Naive thymus-derived CD4-positive, alpha-beta T cell (primary cell): ENCODE measurements at regions of chr13 and their contacts with region 1.

Region 1: GRCh38 chr13:98576963-98577822 is at the start of gene STK24:
- DNase-seq: peak in 5 of 9 donors; percentile 34 to 87 (median 66)
- ATAC-seq: peak; percentile 85
- H3K4me3 ChIP-seq: peak within 1 kb of the TSS; percentile 72
- H3K4me3 Mint-ChIP-seq: peak within 1 kb of the TSS; percentile 84 to 99 (median 93)
- H3K27ac ChIP-seq: peak within 1 kb of the TSS; percentile 85
- H3K27ac Mint-ChIP-seq: peak within 1 kb of the TSS; percentile 84 to 96 (median 93)
- H3K4me1 ChIP-seq: peaks cover 26 to 35% of the 10 kb centered on the region in 2 donors
- H3K4me1 Mint-ChIP-seq: peaks cover 35 to 48% (median 37%) of the 10 kb centered on the region in 7 donors
- H3K27me3 ChIP-seq: no peaks in the 10 kb centered on the region
- H3K27me3 Mint-ChIP-seq: no peaks in the 10 kb centered on the region
- total RNA-seq, gene STK24: 90.1 to 148 (median 121) TPM

Region 2: GRCh38 chr13:97432917-97433726 is 1144.1 kb before region 1 on chr13:
- CTCF ChIA-PET with region 1: no interaction called
- POLR2A ChIA-PET with region 1: interaction called, 3 read pairs
- intact Hi-C with region 1: loop called in 1 of 2 experiments (anchors 1 kb)
- DNase-seq: peak; percentile 97 to 99 (median 99)
- ATAC-seq: peak; percentile 85
- H3K4me3 ChIP-seq: peak overlapping the region; percentile 93
- H3K4me3 Mint-ChIP-seq: peak overlapping the region; percentile 90 to 99 (median 96)
- H3K27ac ChIP-seq: peak overlapping the region; percentile 100
- H3K27ac Mint-ChIP-seq: peak overlapping the region; percentile 98 to 100 (median 100)
- H3K4me1 ChIP-seq: peaks cover 0 to 8% of the 10 kb centered on the region in 2 donors
- H3K4me1 Mint-ChIP-seq: peaks cover 13 to 36% (median 30%) of the 10 kb centered on the region in 7 donors
- H3K27me3 ChIP-seq: no peaks in the 10 kb centered on the region
- H3K27me3 Mint-ChIP-seq: peaks cover 0 to 11% (median 7%) of the 10 kb centered on the region in 5 donors

Region 3: DNA sequence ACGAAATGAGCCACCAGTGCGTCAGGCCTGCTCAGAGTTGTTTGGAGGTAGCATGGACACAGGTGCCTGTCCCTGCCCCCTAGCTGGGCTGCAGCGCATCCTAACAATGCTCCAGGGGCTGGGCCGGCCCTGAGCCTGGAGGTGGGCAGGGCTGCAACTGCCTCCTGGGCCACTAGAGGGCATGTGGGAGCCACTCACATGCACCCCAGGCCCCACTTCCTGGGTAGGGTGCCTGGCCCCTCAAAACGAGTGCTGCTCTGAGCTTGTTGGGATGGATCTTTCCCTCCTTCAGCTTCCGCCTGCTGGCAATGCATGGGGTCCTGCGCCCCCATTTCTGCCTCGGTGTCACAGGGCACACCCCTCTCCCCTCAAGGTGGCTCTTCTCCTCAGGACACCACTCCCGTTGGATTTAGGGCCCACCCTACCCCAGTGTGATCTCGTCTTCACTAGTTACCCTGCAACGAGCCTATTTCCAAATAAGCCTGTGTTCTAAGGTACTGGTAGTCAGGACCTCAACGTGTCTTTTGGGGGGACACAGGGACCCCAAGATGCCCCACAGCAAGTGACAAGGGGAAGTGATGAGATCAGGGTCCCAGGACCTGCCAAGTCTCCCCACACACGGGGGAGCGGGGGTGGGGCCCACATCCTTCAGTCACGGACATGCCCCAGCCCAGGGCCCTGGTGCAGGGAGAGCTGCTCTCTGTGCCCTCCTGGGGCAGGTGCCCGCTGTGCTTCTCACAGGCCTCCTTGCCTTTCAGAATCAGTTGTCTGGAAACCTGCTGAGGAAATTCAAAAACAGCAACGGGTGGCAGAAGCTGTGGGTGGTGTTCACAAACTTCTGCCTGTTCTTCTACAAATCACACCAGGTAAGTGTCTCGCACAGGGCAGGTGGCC is 131.6 kb before region 1 on chr13:
- CTCF ChIA-PET with region 1: interaction called, 5 read pairs
- POLR2A ChIA-PET with region 1: no interaction called
- intact Hi-C with region 1: loop called in 1 of 2 experiments (anchors 1 kb)
- DNase-seq: peak; percentile 59 to 82 (median 73)
- ATAC-seq: peak; percentile 95
- H3K4me3 ChIP-seq: no peak overlapping the region
- H3K4me3 Mint-ChIP-seq: peak overlapping the region in 9 of 10 donors; percentile 8 to 76 (median 68)
- H3K27ac ChIP-seq: peak overlapping the region; percentile 58
- H3K27ac Mint-ChIP-seq: peak overlapping the region; percentile 46 to 92 (median 88)
- H3K4me1 ChIP-seq: peaks cover 10 to 15% of the 10 kb centered on the region in 2 donors
- H3K4me1 Mint-ChIP-seq: peaks cover 0 to 23% (median 14%) of the 10 kb centered on the region in 7 donors
- H3K27me3 ChIP-seq: no peaks in the 10 kb centered on the region
- H3K27me3 Mint-ChIP-seq: no peaks in the 10 kb centered on the region

Region 4: DNA sequence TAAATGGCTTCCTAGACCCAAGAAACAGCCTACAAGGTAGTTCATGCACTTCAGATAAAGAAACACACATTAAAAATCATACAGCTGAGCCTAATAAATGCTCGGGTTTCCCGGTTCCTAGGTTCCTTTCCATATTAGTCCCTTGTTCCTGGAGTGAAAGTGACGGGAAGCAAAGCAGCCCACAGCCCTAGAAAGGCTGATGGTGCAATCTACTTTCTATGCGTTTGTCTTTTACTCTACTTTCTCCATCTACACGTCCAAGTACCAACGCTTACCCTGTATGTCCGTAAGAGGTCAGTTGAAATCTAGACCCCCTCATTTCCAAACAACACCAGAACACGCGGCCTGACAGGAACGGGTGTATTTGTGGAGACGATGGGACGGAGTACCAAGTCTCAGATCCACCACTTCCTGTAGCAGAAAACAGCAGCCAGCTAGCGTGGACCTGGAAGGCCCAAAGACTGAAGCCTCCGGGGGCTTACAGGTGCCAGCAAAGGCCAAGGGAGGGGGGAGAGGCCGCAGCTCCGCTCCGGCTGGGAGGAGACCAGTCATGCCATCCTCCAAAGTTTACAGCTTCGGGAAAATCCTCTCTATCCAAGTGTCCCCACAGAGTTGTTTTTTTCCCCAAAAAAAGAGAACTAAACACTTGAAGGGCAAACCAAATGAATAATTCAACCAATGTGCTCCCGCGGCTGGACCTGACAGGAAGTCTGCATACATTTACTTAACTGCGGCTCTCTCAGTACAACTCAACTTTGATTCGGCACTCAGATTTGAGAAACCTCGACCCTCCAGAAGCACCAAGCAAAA is 34.4 kb before region 1 on chr13:
- CTCF ChIA-PET with region 1: interaction called, 3 read pairs
- POLR2A ChIA-PET with region 1: interaction called, 4 read pairs
- intact Hi-C with region 1: loop called (anchors 1 to 2 kb)
- DNase-seq: peak in 5 of 9 donors; percentile 31 to 39 (median 37)
- ATAC-seq: peak; percentile 65
- H3K4me3 ChIP-seq: peak overlapping the region; percentile 43
- H3K4me3 Mint-ChIP-seq: peak overlapping the region; percentile 79 to 87 (median 84)
- H3K27ac ChIP-seq: peak overlapping the region; percentile 32
- H3K27ac Mint-ChIP-seq: peak overlapping the region; percentile 61 to 91 (median 82)
- H3K4me1 ChIP-seq: peaks cover 38 to 49% of the 10 kb centered on the region in 2 donors
- H3K4me1 Mint-ChIP-seq: peaks cover 75 to 97% (median 94%) of the 10 kb centered on the region in 7 donors
- H3K27me3 ChIP-seq: no peaks in the 10 kb centered on the region
- H3K27me3 Mint-ChIP-seq: no peaks in the 10 kb centered on the region

Region 5: DNA sequence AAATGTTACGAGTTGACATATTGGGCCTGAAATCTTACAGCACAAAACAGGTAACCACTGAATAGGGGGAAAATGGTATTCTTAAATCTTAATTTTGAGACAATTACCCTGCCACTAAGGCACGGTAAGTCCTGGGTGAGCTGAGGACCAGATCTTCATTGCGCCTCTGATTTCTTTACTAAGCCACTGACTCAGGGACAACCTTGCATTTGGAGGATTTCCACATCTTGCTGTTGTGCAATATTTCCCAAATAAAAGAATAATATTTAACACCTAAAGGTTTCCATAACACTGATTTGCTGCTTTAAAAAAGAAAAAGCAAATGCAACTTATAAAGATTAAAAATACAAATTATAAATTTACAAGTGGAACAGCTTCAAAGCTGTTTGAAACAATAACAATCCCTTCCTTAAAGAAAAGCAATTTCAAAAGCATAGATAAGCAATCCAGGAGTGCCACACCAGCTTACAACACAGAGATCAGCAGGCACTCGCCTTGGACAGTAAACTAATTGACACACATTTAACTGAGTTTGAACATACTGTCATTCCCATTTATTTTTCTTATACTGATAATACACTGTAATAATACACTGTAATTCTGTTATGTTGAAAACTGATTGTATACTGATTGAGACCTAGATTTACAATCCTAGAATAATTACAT is 480.2 kb after region 1 on chr13:
- CTCF ChIA-PET with region 1: no interaction called
- POLR2A ChIA-PET with region 1: no interaction called
- intact Hi-C with region 1: loop called in 1 of 2 experiments (anchors 10 kb)
- DNase-seq: no peak
- ATAC-seq: no peak
- H3K4me3 ChIP-seq: no peak overlapping the region
- H3K4me3 Mint-ChIP-seq: peak overlapping the region in 2 of 10 donors; percentile 8 to 50
- H3K27ac ChIP-seq: no peak overlapping the region
- H3K27ac Mint-ChIP-seq: peak overlapping the region in 8 of 9 donors; percentile 7 to 96 (median 74)
- H3K4me1 ChIP-seq: peaks cover 28 to 78% of the 10 kb centered on the region in 2 donors
- H3K4me1 Mint-ChIP-seq: peaks cover 46 to 99% (median 94%) of the 10 kb centered on the region in 7 donors
- H3K27me3 ChIP-seq: no peaks in the 10 kb centered on the region
- H3K27me3 Mint-ChIP-seq: peaks cover 0 to 19% (median 0%) of the 10 kb centered on the region in 5 donors